ENCODE measurements at regions of chr20 and their contacts with region 1.

Region 1: DNA sequence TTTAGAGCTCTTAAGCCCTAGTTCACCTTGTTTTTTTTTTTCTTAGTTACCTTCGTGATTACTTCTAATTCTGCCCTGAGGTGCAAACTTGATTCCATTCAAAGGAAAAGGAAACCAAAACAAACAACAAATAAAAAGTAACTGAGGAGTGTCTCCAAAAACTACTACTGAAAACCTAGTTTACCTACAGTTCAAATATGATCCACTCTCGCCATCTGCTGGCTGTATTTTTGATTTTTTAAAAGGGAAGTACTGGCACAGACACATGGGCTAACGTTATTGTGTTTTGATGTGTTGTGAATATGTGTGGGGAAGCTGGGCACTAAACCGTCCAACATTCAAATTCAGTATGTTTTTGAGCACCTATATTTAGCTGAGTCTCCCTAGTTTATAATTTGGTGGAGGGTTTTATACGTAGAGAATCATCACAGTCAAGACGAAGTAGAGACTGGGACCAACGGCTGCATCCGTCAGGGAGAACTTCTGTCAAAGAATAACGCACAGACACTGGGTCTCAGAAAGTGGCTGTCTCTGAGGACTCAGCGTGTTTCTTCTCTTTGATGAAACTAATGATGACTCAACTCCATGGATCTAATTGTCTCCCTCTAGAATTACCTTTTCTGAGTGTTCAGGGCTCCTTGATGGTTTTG is 373.5 kb upstream of the BTBD3 start:
- H3K4me3 Mint-ChIP-seq: no peak overlapping the region
- H3K27ac Mint-ChIP-seq: no peak overlapping the region
- H3K4me1 Mint-ChIP-seq: no peaks in the 10 kb centered on the region
- H3K27me3 Mint-ChIP-seq: no peaks in the 10 kb centered on the region

Region 2: DNA sequence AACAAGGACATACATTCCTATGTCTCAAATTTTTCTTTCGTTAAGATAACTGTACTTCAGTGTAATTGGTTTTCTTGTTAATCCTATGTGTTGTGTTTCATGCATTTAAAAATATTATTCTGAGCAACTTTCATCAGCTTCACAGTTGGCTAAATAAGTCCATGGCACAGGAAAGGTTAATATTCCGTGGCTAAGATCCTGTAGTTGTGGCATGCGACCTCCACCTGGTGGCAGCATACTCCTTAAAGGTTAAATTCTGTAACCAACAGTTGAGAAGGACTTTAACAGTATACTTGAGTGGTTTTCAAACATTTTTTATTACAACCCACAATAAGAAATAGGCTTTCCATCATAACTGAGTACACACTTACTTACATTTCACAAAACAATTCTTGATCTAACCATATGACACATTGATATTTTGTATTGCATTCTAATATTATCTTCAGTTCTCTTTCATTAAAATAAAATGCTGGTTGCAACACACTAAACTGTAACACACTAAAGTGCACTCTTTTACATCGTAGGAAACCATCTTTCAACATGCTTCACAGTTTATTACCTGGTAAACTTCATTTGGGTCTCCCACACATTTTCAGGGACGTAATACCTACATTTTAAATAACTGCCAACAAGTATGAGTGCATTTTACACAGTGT is 990.7 kb before region 1 on chr20:
- intact Hi-C with region 1: loop called (anchors 10 kb)
- H3K4me3 Mint-ChIP-seq: no peak overlapping the region
- H3K27ac Mint-ChIP-seq: no peak overlapping the region
- H3K4me1 Mint-ChIP-seq: peaks cover 39% of the 10 kb centered on the region
- H3K27me3 Mint-ChIP-seq: no peaks in the 10 kb centered on the region

Region 3: GRCh38 chr20:11274141-11274594 is 270.0 kb before region 1 on chr20:
- intact Hi-C with region 1: loop called (anchors 1 kb)
- H3K4me3 Mint-ChIP-seq: no peak overlapping the region
- H3K27ac Mint-ChIP-seq: no peak overlapping the region
- H3K4me1 Mint-ChIP-seq: peaks cover 10% of the 10 kb centered on the region
- H3K27me3 Mint-ChIP-seq: peaks cover 1% of the 10 kb centered on the region

Region 4: DNA sequence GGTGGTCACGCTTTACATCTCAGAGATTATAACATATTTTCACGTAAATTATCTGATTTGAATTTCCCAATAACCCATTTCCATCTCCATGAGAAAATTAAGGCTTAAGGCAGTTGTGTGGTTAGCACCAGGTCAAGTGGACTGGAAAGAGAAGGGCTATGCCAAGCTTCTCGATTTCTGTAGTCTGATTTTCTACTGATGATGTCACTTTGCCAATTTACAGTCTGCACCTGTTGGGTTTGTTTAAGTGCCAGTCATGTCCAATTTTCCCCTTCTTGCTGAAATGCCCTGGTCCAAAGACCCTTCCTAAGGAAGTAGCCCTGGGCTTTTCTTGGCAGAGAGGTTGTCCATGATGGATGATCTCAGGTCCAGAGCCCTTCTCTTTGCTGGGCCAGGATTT is 188.8 kb before region 1 on chr20:
- intact Hi-C with region 1: no loop called
- H3K4me3 Mint-ChIP-seq: no peak overlapping the region
- H3K27ac Mint-ChIP-seq: no peak overlapping the region
- H3K4me1 Mint-ChIP-seq: peaks cover 5% of the 10 kb centered on the region
- H3K27me3 Mint-ChIP-seq: no peaks in the 10 kb centered on the region

Measured in dendritic cell treated with granulocyte-macrophage colony-stimulating factor and Interleukin-4, amounts not matched to agents 40 ng/mL and 50 ng/mL, for 4 days (primary cell).